ENCODE measurements at regions of chr12 and their contacts with region 1.

Region 1: GRCh38 chr12:442235-442884 is 17.4 kb upstream of the B4GALNT3 start:
- DNase-seq: peak; percentile 55
- ATAC-seq: no peak
- H3K4me3 Mint-ChIP-seq: no peak overlapping the region
- H3K27ac Mint-ChIP-seq: no peak overlapping the region
- H3K4me1 Mint-ChIP-seq: no peaks in the 10 kb centered on the region
- H3K27me3 Mint-ChIP-seq: no peaks in the 10 kb centered on the region

Region 2: GRCh38 chr12:401235-402028 is 40.9 kb before region 1 on chr12 and contains the start of gene CCDC77:
- CTCF ChIA-PET with region 1: interaction called, 10 read pairs
- POLR2A ChIA-PET with region 1: no interaction called
- intact Hi-C with region 1: no loop called
- DNase-seq: peak; percentile 96
- ATAC-seq: peak; percentile 100
- H3K4me3 Mint-ChIP-seq: no peak within 1 kb of the TSS
- H3K27ac Mint-ChIP-seq: no peak within 1 kb of the TSS
- H3K4me1 Mint-ChIP-seq: peaks cover 5% of the 10 kb centered on the region
- H3K27me3 Mint-ChIP-seq: no peaks in the 10 kb centered on the region
- total RNA-seq, gene CCDC77: 17.3 to 18.7 TPM

Region 3: DNA sequence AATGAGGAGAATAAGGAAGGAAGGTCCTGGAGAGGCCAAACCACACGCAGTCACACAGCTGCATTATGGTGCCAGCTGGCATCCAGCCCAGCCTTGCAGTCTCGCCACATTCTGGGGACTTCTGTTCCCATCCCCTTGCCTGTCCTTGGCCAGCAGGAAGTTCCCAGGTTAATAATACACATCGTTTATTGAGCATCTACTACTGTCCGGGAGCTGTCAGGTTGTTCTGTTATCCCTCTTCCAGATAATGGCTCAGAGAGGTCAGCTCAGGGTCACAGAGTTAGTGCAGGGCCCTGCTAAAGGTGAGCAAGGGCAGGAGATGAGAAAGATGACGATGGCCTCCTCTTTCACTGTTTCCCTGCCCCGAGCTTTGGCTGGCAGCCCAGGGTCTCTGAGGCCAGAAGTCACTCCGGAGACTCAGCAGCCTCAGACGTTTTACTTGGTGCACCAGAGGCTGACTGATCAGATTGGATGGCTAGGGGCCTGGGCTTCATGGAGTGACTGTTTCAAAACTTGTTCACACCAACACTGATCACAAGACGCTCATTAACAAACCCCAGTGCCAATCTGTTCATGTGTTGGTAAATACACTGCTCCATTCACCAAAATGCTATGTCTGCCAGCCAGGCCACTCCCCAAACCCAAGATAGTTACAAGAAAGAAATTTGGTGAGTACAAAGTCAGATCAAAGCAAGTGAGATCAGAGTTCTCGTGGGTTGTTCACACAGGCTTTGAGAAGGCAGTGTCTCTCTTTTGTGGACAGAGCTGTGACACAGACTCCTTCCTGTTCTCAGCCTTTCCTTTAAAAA is 96.6 kb after region 1 on chr12:
- CTCF ChIA-PET with region 1: interaction called, 10 read pairs
- POLR2A ChIA-PET with region 1: no interaction called
- intact Hi-C with region 1: no loop called
- DNase-seq: peak; percentile 41
- ATAC-seq: peak; percentile 94
- H3K4me3 Mint-ChIP-seq: no peak overlapping the region
- H3K27ac Mint-ChIP-seq: peak overlapping the region; percentile 58
- H3K4me1 Mint-ChIP-seq: peaks cover 20% of the 10 kb centered on the region
- H3K27me3 Mint-ChIP-seq: no peaks in the 10 kb centered on the region

Region 4: GRCh38 chr12:546921-547845 is 104.8 kb after region 1 on chr12:
- CTCF ChIA-PET with region 1: interaction called, 22 read pairs
- POLR2A ChIA-PET with region 1: no interaction called
- intact Hi-C with region 1: loop called in 1 of 2 experiments (anchors 1 kb)
- DNase-seq: peak; percentile 84
- ATAC-seq: peak; percentile 85
- H3K4me3 Mint-ChIP-seq: no peak overlapping the region
- H3K27ac Mint-ChIP-seq: no peak overlapping the region
- H3K4me1 Mint-ChIP-seq: peaks cover 24% of the 10 kb centered on the region
- H3K27me3 Mint-ChIP-seq: peaks cover 4% of the 10 kb centered on the region